Aorta (tissue), 5 donors: ENCODE measurements at regions of chr2 and their contacts with region 1.

Region 1: GRCh38 chr2:128090945-128091725 is at the start of gene UGGT1:
- DNase-seq: peak; percentile 97 to 98
- ATAC-seq: peak; percentile 100
- H3K4me3 ChIP-seq: peak within 1 kb of the TSS; percentile 54 to 61
- H3K27ac ChIP-seq: peak within 1 kb of the TSS in 1 of 2 donors; percentile 41
- H3K4me1 ChIP-seq: peaks cover 0 to 7% of the 10 kb centered on the region in 2 donors
- H3K27me3 ChIP-seq: no peaks in the 10 kb centered on the region
- total RNA-seq, gene UGGT1: 38.1 to 39.2 TPM

Region 2: DNA sequence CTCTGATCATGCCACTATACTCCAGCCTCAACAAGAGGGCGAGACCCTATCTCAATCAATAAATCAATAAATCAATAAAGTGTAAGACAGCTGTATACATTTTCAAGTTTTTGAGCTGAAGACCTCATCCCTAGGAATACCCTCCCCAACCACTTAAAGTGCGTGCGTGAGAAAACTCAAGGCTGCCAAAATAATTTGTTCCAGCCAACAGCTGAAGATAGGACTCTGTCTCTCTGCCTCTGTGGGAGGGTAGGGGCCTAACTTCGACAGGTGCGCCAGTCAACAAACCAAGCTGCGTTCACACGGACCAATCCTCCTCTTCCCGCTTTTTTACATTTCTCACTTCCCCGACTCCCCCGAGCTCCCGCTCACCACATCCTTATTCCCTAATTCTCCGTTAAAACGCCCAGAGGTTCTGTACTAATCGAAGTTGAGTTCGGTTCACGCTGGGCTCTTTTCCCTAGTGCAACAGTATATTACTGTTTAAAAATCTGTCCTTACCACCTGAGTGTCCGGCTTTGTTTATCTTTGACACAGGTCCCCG is 233.8 kb before region 1 on chr2:
- intact Hi-C with region 1: loop called in 1 of 2 experiments (anchors 10 kb)
- DNase-seq: no peak
- ATAC-seq: no peak
- H3K4me3 ChIP-seq: peak overlapping the region; percentile 50 to 76
- H3K27ac ChIP-seq: no peak overlapping the region
- H3K4me1 ChIP-seq: no peaks in the 10 kb centered on the region
- H3K27me3 ChIP-seq: no peaks in the 10 kb centered on the region

Region 3: GRCh38 chr2:127891811-127892210 is 199.3 kb before region 1 on chr2:
- intact Hi-C with region 1: loop called in 1 of 2 experiments (anchors 10 kb)
- DNase-seq: no peak
- ATAC-seq: no peak
- H3K4me3 ChIP-seq: no peak overlapping the region
- H3K27ac ChIP-seq: no peak overlapping the region
- H3K4me1 ChIP-seq: peaks cover 2 to 8% of the 10 kb centered on the region in 2 donors
- H3K27me3 ChIP-seq: no peaks in the 10 kb centered on the region

Region 4: GRCh38 chr2:128027801-128028667 is 63.1 kb before region 1 on chr2 and contains the start of gene SAP130:
- intact Hi-C with region 1: loop called (anchors 2 to 5 kb)
- DNase-seq: peak; percentile 99 to 100
- ATAC-seq: peak; percentile 97
- H3K4me3 ChIP-seq: peak within 1 kb of the TSS; percentile 86 to 90
- H3K27ac ChIP-seq: peak within 1 kb of the TSS in 1 of 2 donors; percentile 91
- H3K4me1 ChIP-seq: no peaks in the 10 kb centered on the region
- H3K27me3 ChIP-seq: no peaks in the 10 kb centered on the region
- total RNA-seq, gene SAP130: 23.5 to 23.8 TPM